OCI-LY7 (cell line): ENCODE measurements at regions of chr15 and their contacts with region 1.

Region 1: GRCh38 chr15:70318594-70319465 is 221.1 kb upstream of the TLE3 start:
- DNase-seq: no peak
- H3K4me3 ChIP-seq: peak overlapping the region; percentile 33
- H3K27ac ChIP-seq: peak overlapping the region; percentile 81
- H3K4me1 ChIP-seq: peaks cover 53% of the 10 kb centered on the region
- CTCF ChIP-seq: 0 out of 2 replicates have a peak, but pooled peaks have one; percentile 11

Region 2: DNA sequence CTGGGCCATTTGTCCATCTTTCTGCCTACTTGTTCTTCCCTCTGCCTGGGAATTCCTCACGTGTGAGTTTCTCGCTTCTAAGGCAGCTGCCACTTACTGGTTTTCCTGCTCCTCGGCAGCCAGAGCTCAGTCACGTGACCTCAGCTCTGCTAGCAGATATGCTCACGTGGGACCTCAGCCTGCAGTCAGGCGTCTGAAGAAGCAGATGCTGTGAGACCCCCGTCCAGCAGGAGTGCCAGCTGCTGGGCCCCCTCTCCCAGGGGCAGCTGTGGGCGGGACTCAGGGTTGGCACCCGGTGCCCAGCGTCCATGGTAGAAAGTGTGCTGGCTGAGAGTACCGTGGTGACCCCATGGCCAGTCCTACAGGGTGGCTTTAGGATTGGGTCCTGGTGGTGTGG is 59.8 kb before region 1 on chr15:
- CTCF ChIA-PET with region 1: no interaction called
- POLR2A ChIA-PET with region 1: no interaction called
- intact Hi-C with region 1: loop called (anchors 5 kb)
- DNase-seq: peak; percentile 56
- H3K4me3 ChIP-seq: no peak overlapping the region
- H3K27ac ChIP-seq: no peak overlapping the region
- H3K4me1 ChIP-seq: peaks cover 61% of the 10 kb centered on the region
- CTCF ChIP-seq: no peak

Region 3: DNA sequence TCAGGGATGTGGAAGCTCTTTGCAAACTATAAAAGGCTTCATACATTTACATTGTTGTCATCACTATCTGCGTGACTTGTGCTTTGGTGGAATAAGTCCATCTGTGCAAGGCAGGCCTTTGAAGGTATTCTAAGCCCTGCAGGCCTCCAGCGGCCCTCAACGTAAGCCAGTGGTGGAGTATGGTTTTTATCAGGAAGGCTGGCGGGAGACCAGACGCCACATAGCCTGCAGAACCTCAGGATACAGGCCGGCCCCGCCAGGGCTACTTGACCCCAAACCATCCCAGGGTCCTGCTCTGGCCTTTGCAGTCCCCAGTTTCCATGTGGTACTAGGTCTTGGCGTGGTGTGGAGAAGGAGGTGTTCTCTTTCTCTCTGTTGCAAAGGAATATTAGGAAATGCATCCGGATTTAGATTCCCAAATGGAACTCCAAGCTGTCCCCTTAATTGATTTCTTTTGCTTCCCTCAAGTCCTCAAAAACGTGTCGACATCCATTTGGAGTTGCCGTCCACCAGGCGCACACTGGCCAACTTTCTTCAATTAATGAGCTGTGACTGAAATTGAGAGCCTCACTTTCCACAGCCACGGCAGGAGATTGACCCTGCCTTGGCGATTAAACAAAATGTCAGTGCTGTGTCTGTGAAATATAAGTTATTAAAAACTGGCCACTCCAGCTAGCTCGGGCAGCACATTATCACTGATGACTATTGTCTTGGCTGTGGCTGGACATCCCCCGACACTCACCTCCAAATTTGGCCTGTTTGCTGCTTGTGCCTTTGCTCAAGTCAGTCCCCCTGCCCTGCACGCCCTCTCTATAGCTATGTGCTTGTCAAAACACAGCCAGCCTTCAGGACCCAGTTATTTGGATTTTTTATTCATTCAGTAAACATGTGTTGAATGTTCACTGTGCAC is 18.7 kb after region 1 on chr15:
- CTCF ChIA-PET with region 1: no interaction called
- POLR2A ChIA-PET with region 1: no interaction called
- intact Hi-C with region 1: no loop called
- DNase-seq: no peak
- H3K4me3 ChIP-seq: no peak overlapping the region
- H3K27ac ChIP-seq: no peak overlapping the region
- H3K4me1 ChIP-seq: no peaks in the 10 kb centered on the region
- CTCF ChIP-seq: no peak